AG04449 (cell line): ENCODE measurements at regions of chr3 and their contacts with region 1.

Region 1: DNA sequence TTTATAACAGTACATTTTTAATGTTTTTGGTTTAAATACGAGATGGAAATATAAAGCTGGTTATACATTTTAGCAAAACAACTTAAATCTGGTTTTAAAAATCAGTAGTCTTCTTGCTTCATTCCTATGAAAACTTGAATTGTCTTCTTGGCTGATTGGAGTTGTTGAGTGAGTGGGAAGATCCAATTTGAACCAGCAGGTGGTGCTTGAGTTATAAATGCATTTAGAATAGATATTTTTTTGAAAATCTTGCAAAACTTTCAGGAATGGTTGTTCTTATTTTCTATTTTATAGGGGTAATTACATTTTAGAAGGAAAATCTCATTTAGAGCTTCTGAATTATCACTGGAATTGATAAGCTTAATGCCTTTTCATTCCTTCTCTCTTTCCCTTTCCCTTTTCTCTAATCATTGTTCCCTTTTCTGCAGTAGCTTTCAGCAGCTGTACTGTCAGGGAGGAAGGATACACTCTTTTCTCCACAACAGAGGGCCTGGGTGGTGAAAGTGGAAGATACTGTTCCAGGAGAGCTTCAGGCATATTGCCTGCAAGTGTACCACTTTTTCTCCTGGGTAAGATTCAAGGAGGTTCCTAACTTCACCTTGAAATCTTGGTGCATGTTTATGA is 335.6 kb downstream of the NLGN1 start:
- DNase-seq: no peak
- H3K4me3 ChIP-seq: no peak overlapping the region
- CTCF ChIP-seq: peak; percentile 40

Region 2: DNA sequence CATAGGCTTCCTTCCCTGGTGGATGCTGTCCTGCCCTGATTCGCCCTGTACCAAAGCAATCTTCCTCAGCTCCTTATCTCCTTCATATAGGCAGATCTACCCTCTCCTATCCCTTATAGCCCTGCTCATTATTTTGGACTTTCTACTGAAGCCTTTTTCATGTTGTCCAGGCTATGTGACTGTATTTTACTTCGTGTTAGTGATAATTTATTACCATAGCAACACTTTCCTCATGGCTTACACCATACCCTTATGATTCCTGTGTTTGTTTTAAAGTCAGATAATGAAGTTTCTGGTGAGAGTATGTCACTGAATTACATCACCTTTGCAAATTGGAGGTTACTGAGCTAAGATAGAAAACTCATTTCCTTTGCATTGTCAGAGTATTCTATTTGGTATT is 17.0 kb after region 1 on chr3:
- CTCF ChIA-PET with region 1: interaction called, 19 read pairs
- POLR2A ChIA-PET with region 1: no interaction called
- DNase-seq: no peak
- H3K4me3 ChIP-seq: no peak overlapping the region
- CTCF ChIP-seq: no peak

Region 3: GRCh38 chr3:173993299-173993698 is 260.2 kb after region 1 on chr3:
- CTCF ChIA-PET with region 1: interaction called, 11 read pairs
- POLR2A ChIA-PET with region 1: no interaction called
- DNase-seq: no peak
- H3K4me3 ChIP-seq: no peak overlapping the region
- CTCF ChIP-seq: peak; percentile 25

Region 4: GRCh38 chr3:174101244-174101643 is 368.1 kb after region 1 on chr3:
- CTCF ChIA-PET with region 1: no interaction called
- POLR2A ChIA-PET with region 1: no interaction called
- DNase-seq: no peak
- H3K4me3 ChIP-seq: no peak overlapping the region
- CTCF ChIP-seq: no peak